AG04450 (cell line): ENCODE measurements at regions of chr15 and their contacts with region 1.

Region 1: GRCh38 chr15:67839929-67840748 is at the start of gene RNU6-1:
- DNase-seq: peak; percentile 84
- H3K4me3 ChIP-seq: peak within 1 kb of the TSS; percentile 92
- H3K27ac ChIP-seq: peak within 1 kb of the TSS; percentile 85
- H3K27me3 ChIP-seq: peaks cover 17% of the 10 kb centered on the region
- CTCF ChIP-seq: no peak
- polyA plus RNA-seq, gene RNU6-1: not detected in 2 replicates

Region 2: GRCh38 chr15:67444100-67444499 is 396.0 kb before region 1 on chr15:
- CTCF ChIA-PET with region 1: interaction called, 11 read pairs
- POLR2A ChIA-PET with region 1: no interaction called
- DNase-seq: no peak
- H3K4me3 ChIP-seq: no peak overlapping the region
- H3K27ac ChIP-seq: no peak overlapping the region
- H3K27me3 ChIP-seq: peaks cover 7% of the 10 kb centered on the region
- CTCF ChIP-seq: no peak

Region 3: GRCh38 chr15:67501836-67502461 is 338.2 kb before region 1 on chr15:
- CTCF ChIA-PET with region 1: interaction called, 18 read pairs
- POLR2A ChIA-PET with region 1: no interaction called
- DNase-seq: no peak
- H3K4me3 ChIP-seq: no peak overlapping the region
- H3K27ac ChIP-seq: no peak overlapping the region
- H3K27me3 ChIP-seq: no peaks in the 10 kb centered on the region
- CTCF ChIP-seq: no peak

Region 4: GRCh38 chr15:67957435-67958132 is 117.4 kb after region 1 on chr15:
- CTCF ChIA-PET with region 1: no interaction called
- POLR2A ChIA-PET with region 1: no interaction called
- DNase-seq: no peak
- H3K4me3 ChIP-seq: no peak overlapping the region
- H3K27ac ChIP-seq: no peak overlapping the region
- H3K27me3 ChIP-seq: peaks cover 23% of the 10 kb centered on the region
- CTCF ChIP-seq: no peak

Region 5: GRCh38 chr15:68154923-68155559 is 314.9 kb after region 1 on chr15:
- CTCF ChIA-PET with region 1: interaction called, 10 read pairs
- POLR2A ChIA-PET with region 1: no interaction called
- DNase-seq: peak; percentile 34
- H3K4me3 ChIP-seq: no peak overlapping the region
- H3K27ac ChIP-seq: no peak overlapping the region
- H3K27me3 ChIP-seq: no peaks in the 10 kb centered on the region
- CTCF ChIP-seq: peak; percentile 85